AG04449 (cell line): ENCODE measurements at regions of chrX and their contacts with region 1.

Region 1: DNA sequence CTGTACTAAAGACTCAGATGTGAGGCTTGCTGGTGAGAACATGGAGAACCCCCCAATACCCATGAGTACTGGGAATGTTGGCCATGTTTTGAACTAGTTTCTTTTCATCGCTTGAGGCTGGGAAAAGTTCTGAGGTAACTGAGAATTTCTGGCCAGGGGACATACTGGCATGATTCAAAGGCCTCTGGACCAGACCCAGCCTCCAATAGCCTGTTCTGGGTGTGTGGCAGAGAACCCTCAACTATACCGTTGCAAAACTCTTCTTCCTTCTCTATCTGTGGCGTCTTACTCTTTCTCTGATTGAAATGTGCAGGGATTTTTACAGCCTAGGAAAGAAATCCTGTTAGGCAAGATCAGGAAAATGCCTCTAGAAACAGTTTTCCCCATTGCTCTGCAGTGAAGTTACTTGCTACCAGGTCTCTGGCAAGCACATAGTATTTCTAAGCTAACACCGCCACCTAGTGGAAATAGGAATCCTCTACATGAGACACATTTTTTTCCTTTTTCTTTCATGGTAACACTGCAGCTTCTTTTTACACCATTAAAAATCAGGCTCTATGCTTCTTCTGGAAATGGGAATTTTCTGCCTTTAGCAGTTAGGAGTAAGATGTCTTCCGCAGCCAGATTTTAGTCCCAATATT is 170.7 kb upstream of the ZCCHC13 start:
- DNase-seq: peak; percentile 10
- H3K4me3 ChIP-seq: no peak overlapping the region
- CTCF ChIP-seq: peak; percentile 51

Region 2: DNA sequence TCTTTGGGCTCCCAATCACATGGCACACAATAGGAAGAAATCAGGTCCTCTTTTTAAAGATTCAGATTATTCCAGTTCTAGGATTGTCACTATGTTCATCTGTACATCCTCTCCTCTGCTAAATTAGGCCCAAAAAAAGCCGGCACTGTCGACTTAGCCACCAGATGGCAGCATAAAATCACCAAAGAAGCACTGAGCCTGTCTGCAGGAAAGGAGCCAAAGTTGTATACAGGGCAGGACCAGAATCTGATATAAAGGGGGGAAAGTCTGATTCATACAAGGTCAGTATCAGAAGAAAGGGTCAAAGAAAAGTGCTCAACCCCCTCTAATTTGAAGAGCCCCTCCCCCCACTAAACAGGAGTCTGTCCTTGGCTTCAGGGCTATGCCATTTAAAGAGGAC is 277.7 kb before region 1 on chrX:
- CTCF ChIA-PET with region 1: interaction called, 48 read pairs
- POLR2A ChIA-PET with region 1: no interaction called
- DNase-seq: peak; percentile 1
- H3K4me3 ChIP-seq: no peak overlapping the region
- CTCF ChIP-seq: peak; percentile 46

Region 3: GRCh38 chrX:73943693-73944562 is 189.3 kb before region 1 on chrX:
- CTCF ChIA-PET with region 1: no interaction called
- POLR2A ChIA-PET with region 1: no interaction called
- DNase-seq: no peak
- H3K4me3 ChIP-seq: peak overlapping the region; percentile 75
- CTCF ChIP-seq: no peak

Region 4: DNA sequence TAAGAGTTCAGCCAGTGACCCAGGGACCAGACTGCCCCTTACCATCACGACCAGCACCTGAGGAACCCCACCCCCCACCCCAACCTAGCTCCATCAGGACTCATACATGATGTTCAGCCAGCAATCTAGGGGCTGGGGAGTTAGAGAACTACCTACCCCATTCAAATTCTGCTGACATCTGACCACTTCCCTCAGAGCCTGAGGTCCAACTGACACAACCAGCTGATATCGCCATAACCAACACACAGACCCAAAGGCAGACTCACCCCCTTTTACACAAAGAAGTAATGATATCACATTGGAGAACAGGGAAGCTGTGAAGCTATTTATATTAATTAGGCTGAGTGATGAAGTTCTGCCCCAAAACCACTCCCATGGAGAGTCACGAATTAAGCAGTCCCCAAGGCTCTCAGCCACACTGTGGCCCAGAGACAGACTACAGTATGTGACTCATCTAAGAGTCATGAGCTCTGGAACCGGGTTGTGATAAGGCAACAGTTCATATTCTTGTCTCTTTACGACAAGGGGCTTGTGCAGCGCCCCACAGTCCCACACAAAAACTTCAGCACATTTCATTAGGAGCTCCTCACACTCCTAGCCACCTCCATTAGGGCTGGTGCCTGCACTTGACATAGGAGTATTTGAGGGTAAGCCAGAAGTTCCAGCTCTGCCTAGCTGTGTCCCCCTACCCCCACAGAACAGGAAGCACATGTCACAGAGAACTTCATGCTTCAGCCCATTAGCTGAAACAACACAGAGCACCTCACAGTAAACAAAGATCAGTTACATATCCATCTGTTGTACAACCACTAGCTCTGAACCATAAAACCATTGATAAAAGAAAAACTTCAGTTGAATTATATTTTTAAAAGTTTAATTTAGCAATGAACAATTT is 14.0 kb before region 1 on chrX:
- CTCF ChIA-PET with region 1: interaction called, 10 read pairs
- POLR2A ChIA-PET with region 1: no interaction called
- DNase-seq: no peak
- H3K4me3 ChIP-seq: no peak overlapping the region
- CTCF ChIP-seq: no peak

Region 5: GRCh38 chrX:74291964-74292807 is 158.9 kb after region 1 on chrX:
- CTCF ChIA-PET with region 1: no interaction called
- POLR2A ChIA-PET with region 1: no interaction called
- DNase-seq: peak; percentile 56
- H3K4me3 ChIP-seq: peak overlapping the region; percentile 78
- CTCF ChIP-seq: no peak